AG04449 (cell line): ENCODE measurements at regions of chr17 and their contacts with region 1.

Region 1: GRCh38 chr17:29931231-29931932 is 1.4 kb upstream of the SSH2 start:
- DNase-seq: no peak
- H3K4me3 ChIP-seq: peak overlapping the region; percentile 97
- CTCF ChIP-seq: peak; percentile 77

Region 2: GRCh38 chr17:29561554-29562517 is 369.5 kb before region 1 on chr17:
- CTCF ChIA-PET with region 1: no interaction called
- POLR2A ChIA-PET with region 1: no interaction called
- DNase-seq: no peak
- H3K4me3 ChIP-seq: no peak overlapping the region
- CTCF ChIP-seq: no peak

Region 3: GRCh38 chr17:29579866-29580771 is 351.3 kb before region 1 on chr17:
- CTCF ChIA-PET with region 1: interaction called, 23 read pairs
- POLR2A ChIA-PET with region 1: no interaction called
- DNase-seq: no peak
- H3K4me3 ChIP-seq: no peak overlapping the region
- CTCF ChIP-seq: peak; percentile 95

Region 4: DNA sequence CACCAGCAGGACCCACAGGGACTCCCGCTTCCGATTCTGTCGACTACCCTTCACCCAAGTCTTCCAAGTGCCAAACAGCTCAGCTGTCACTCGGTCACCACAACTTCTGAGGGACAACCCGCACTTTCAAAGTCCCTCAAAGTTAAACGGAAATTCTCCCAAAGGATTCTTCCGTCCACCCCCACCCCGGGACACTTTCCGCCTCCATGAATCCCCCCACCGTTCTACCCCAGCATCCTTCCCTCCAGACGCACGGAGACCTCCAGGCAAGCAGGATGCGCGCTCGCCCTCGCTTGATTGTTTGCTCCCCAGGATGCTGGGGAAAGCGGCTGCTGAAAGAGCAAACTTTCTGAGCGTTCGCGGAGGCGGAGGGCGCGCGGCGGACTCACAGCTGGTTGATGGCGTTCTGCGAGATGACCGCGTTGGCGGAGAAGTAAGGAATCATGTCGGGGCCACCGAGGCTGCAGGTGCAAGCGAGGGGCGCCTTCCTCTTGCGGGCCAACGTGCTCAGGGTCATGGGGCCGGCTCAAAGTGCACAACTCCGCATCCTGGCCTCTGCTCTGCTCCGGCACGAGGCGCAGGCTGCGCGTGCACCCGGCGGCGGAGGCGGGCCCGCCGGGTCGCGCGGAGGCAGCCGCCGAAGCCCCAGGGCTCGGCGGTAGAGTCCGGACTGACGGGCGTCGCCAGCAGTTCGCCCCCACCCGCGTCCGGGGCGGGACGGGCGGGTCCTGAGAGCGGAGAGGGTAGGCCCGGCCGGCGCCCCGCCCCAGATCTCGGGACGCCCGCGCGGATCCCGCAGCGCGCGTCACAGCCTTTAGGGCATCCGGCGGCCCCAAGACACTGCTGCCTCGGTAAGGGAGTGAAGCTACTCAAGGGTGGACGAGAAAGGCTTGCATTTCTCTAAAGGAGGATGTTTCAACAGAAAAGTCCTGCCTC is 170.4 kb before region 1 on chr17:
- CTCF ChIA-PET with region 1: interaction called, 12 read pairs
- POLR2A ChIA-PET with region 1: no interaction called
- DNase-seq: no peak
- H3K4me3 ChIP-seq: peak overlapping the region; percentile 72
- CTCF ChIP-seq: no peak

Region 5: DNA sequence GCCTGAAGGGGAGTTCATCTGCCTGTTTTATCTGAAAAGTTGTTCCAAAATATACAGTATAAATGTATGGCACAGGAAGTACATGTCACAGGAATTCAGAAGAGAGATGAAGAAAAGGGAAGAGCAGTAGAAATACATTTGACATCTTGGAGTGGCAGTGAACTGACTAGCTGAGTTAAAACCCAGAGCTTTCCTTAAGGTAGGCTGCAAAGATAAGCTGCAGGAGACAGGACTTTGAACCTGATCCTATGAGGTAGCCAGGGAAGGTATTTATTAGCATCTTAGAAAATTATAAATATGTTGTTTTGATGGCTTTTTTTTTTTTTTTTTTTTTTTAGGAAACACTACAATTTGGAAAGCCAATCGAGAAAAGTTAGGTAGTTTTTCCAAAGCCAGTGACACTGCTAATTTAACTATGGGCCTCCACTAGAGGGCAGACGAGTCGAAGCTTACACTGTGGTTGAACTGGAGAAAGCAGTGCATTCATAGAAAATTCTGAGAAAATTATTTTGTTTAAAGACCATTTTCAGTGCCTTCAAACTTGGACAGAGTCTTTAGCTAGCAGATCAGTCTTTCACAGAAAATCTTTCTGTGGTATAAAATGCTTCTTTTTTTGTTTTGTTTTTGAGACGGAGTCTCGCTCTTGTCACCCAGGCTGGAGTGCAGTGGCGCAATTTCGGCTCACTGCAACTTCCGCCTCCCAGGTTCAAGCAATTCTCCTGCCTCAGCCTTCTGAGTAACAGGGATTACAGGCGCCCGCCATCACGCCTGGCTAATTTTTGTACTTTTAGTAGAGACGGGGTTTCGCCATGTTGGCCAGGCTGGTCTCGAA is 123.6 kb before region 1 on chr17:
- CTCF ChIA-PET with region 1: interaction called, 470 read pairs
- POLR2A ChIA-PET with region 1: interaction called, 3 read pairs
- DNase-seq: no peak
- H3K4me3 ChIP-seq: no peak overlapping the region
- CTCF ChIP-seq: peak; percentile 67

Region 6: GRCh38 chr17:29847527-29848400 is 83.6 kb before region 1 on chr17:
- CTCF ChIA-PET with region 1: interaction called, 25 read pairs
- POLR2A ChIA-PET with region 1: no interaction called
- DNase-seq: no peak
- H3K4me3 ChIP-seq: no peak overlapping the region
- CTCF ChIP-seq: no peak

Region 7: GRCh38 chr17:29918922-29919856 is 12.2 kb before region 1 on chr17:
- CTCF ChIA-PET with region 1: interaction called, 78 read pairs
- POLR2A ChIA-PET with region 1: interaction called, 3 read pairs
- DNase-seq: no peak
- H3K4me3 ChIP-seq: no peak overlapping the region
- CTCF ChIP-seq: no peak

Region 8: DNA sequence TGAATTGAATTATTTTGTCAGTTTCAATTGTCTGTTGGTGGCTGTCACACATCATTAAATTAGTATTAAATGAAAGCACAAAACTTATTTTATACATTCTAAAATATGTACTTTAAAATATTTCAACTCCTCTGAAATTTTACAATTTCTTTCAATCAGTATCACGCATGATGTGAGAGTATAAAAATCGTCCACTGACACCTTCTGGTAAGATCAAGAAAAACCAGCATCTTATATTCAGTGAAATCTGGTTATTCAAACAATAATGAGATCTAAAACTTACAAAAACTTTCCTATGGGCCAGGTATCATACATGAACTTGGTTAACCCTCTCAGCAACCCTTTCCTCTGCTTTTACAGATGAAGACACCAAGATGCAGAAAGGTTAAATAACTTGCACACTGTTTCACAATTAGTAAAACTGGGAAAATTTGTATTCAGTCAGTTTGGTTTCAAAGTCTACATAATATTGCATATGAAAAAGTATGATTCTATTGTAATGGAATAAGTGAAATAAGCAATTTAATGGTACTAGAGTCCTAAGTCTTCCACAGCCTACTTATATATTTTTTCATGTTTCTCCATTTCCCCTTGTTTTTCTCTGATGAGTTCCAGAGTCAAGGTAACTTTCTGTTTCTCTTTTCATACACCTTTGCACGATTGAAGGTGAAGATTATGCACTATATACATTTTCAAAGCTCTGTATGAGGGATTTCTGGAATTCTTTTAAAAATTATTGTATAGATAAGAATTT is 68.8 kb after region 1 on chr17:
- CTCF ChIA-PET with region 1: interaction called, 21 read pairs
- POLR2A ChIA-PET with region 1: no interaction called
- DNase-seq: no peak
- H3K4me3 ChIP-seq: no peak overlapping the region
- CTCF ChIP-seq: no peak